Dorsolateral prefrontal cortex (tissue), 120 donors: ENCODE measurements at regions of chr5 and their contacts with region 1.

Region 1: DNA sequence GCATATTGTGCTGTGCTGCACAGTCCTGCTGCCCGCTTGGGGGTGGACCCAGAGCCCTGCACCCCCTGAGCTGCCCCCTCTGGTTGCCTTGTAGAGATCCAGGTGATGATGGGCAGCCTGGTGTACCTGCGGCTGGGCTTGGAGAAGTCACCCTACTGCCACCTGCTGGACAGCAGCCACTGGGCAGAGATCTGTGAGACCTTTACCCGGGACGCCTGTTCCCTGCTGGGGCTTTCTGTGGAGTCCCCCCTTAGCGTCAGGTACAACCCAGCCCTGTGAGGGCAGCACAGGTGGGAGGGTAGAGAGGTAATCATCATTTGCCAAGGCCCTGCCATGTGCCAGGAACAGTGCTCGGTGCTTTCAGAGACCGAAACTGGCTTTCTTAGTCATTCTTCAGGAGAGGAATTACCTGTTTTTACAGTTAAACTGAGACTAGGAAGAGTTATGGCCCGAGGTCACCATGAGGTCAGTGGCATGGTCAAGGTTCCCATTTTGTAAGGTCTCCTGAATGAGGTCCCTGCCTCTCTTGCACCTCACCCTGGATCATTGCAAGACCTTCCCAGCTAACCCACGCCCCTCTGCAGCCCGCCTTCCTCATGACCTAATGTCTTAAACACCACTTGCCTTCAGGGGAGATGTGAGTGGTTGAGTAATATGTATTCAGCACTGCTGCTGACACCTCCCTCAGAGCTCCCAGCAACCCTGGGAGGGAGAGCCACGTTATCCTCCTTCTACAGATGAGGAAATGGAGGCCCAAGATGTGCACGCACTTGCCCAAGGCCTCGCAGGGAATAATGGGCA is 7.5 kb downstream of the NHP2 start:
- DNase-seq: peak in 6 of 10 donors; percentile 45 to 68 (median 61)
- H3K4me3 ChIP-seq: no peak overlapping the region
- H3K27ac ChIP-seq: no peak overlapping the region
- H3K27me3 ChIP-seq: no peaks in the 10 kb centered on the region
- CTCF ChIP-seq: peak in 55 of 56 donors; percentile 28 to 74 (median 58)

Region 2: GRCh38 chr5:177958696-177959095 is 187.5 kb before region 1 on chr5:
- intact Hi-C with region 1: no loop called
- DNase-seq: peak in 1 of 10 donors; percentile 24
- H3K4me3 ChIP-seq: no peak overlapping the region
- H3K27ac ChIP-seq: no peak overlapping the region
- H3K27me3 ChIP-seq: no peaks in the 10 kb centered on the region
- CTCF ChIP-seq: no peak

Region 3: GRCh38 chr5:178075840-178076548 is 70.2 kb before region 1 on chr5:
- intact Hi-C with region 1: loop called in 1 of 2 experiments (anchors 5 kb)
- DNase-seq: peak in 9 of 10 donors; percentile 46 to 70 (median 65)
- H3K4me3 ChIP-seq: peak overlapping the region in 4 of 59 donors; percentile 10 to 23 (median 18)
- H3K27ac ChIP-seq: no peak overlapping the region
- H3K27me3 ChIP-seq: peaks cover 0 to 20% (median 0%) of the 10 kb centered on the region in 45 donors
- CTCF ChIP-seq: peak; percentile 56 to 93 (median 82)

Region 4: DNA sequence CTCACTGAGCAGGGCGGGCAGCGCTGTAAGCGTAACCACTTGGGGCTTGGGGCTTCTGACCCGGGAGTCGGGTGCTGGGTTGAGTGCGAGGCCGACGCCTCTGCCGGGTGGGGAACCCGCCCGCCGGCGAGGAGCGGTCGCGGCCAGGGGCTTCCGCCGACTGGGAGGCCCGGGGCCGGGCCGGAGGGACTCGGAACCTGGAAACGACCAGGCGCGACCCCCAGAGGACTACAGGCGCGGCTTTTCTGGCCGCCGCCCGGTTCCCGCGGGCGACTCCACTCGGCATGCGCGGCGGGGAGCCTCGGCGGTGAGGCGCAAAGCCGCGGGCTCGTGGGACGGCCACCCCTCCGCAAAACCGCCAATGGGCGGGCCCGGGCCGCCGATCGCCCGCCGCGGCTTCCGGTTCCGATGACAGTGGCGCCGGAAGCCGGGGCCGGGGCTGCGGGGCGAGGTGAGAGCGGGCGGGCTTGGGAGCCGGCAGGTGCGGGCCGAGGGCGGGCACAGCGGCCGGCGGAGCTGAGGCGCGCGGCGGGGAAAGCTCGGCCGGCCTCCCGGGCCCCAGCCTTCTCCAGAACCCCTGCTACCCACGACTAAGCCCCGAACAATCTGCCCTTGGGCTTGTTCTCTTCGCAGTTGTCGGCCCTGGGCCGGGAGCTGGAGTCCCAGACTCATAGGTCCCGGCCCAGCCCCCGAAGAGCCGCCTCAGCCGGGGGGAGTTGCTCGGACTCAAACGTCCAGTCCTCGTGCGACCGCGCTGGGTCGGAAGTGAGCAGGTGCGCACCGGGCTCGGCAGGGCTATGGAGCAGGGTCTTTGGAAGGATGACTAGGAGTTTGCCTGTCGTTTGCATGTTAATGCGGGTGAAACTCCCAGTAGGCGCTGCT is 15.4 kb before region 1 on chr5 and contains the start of gene RMND5B:
- intact Hi-C with region 1: loop called in 1 of 2 experiments (anchors 2 kb)
- DNase-seq: peak; percentile 59 to 90 (median 78)
- H3K4me3 ChIP-seq: peak within 1 kb of the TSS; percentile 68 to 99 (median 92)
- H3K27ac ChIP-seq: peak within 1 kb of the TSS; percentile 34 to 97 (median 88)
- H3K27me3 ChIP-seq: no peaks in the 10 kb centered on the region
- CTCF ChIP-seq: peak in 14 of 56 donors; percentile 6 to 43 (median 15)
- total RNA-seq, gene RMND5B: 30.6 to 55.2 (median 42.7) TPM

Region 5: DNA sequence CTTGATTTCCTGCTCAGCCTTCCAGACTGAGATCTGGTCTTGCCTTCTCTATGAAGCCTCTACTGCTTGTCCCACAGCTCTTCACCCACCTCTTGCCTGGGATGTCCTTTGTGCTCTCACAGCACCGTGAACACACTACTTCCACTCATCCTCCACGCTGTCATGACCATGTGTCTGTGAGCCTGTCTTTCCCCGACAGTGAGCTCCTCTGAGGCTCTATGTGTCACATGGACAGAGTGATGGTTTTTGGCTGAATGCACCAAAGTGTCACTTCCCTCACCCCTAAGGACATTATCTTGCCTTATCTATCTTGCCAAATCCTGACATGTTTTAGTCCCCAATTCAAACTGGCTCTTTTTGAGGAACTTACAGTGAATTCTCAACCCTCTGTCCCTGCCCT is 75.1 kb after region 1 on chr5:
- intact Hi-C with region 1: no loop called
- DNase-seq: no peak
- H3K4me3 ChIP-seq: no peak overlapping the region
- H3K27ac ChIP-seq: peak overlapping the region in 3 of 59 donors; percentile 29 to 41 (median 39)
- H3K27me3 ChIP-seq: no peaks in the 10 kb centered on the region
- CTCF ChIP-seq: no peak